Caco-2 (cell line): ENCODE measurements at regions of chr10 and their contacts with region 1.

Region 1: DNA sequence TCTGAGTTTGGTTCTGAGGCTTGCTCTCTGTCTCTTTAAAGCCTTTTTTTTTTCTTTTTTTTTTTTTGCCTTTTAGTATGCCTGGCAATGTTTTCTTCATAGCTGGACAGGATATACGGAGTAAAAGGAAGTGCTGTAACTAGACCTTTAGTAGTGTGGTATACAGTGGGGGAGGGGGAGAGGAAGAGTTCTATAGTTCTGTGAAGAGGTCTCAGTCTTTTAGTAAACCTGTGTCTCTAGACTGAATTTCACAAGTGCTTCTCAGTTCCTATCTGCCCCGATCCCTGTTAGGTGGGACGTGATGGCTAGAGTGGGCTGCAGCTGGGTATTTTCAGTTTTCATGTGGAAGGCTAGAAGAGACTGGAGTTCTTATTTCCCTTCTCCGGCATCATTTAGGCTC is 3.1 kb upstream of the ABCC2 start:
- DNase-seq: peak in 1 of 2 experiments; percentile 42
- H3K4me3 ChIP-seq: peak overlapping the region; percentile 21
- H3K4me3 Mint-ChIP-seq: peak overlapping the region; percentile 77
- H3K27ac Mint-ChIP-seq: peak overlapping the region; percentile 95
- H3K4me1 ChIP-seq: peaks cover 61% of the 10 kb centered on the region
- H3K4me1 Mint-ChIP-seq: peaks cover 74% of the 10 kb centered on the region
- H3K27me3 ChIP-seq: no peaks in the 10 kb centered on the region
- H3K27me3 Mint-ChIP-seq: no peaks in the 10 kb centered on the region
- CTCF ChIP-seq: no peak

Region 2: GRCh38 chr10:99732033-99732912 is 47.1 kb before region 1 on chr10 and contains the starts of genes COX15 and CUTC:
- CTCF ChIA-PET with region 1: interaction called, 9 read pairs
- POLR2A ChIA-PET with region 1: interaction called, 27 read pairs
- intact Hi-C with region 1: loop called (anchors 1 kb)
- DNase-seq: peak; percentile 97 to 98
- H3K4me3 ChIP-seq: peak within 1 kb of the TSS; percentile 98
- H3K4me3 Mint-ChIP-seq: peak within 1 kb of the TSS; percentile 96
- H3K27ac Mint-ChIP-seq: peak within 1 kb of the TSS; percentile 97
- H3K4me1 ChIP-seq: no peaks in the 10 kb centered on the region; the same call in 1 of the 2 replicates
- H3K4me1 Mint-ChIP-seq: peaks cover 13% of the 10 kb centered on the region
- H3K27me3 ChIP-seq: no peaks in the 10 kb centered on the region
- H3K27me3 Mint-ChIP-seq: no peaks in the 10 kb centered on the region
- CTCF ChIP-seq: peak; percentile 61 to 69
- total RNA-seq, gene COX15: 47.6 and 50.2 TPM in 2 replicates
- total RNA-seq, gene CUTC: 27.6 and 30.1 TPM in 2 replicates

Region 3: GRCh38 chr10:99930731-99931550 is 151.6 kb after region 1 on chr10:
- CTCF ChIA-PET with region 1: no interaction called
- POLR2A ChIA-PET with region 1: no interaction called
- intact Hi-C with region 1: loop called (anchors 2 kb)
- DNase-seq: peak; percentile 94 to 95
- H3K4me3 ChIP-seq: peak overlapping the region; percentile 56
- H3K4me3 Mint-ChIP-seq: peak overlapping the region; percentile 89
- H3K27ac Mint-ChIP-seq: peak overlapping the region; percentile 89
- H3K4me1 ChIP-seq: peaks cover 32% of the 10 kb centered on the region
- H3K4me1 Mint-ChIP-seq: peaks cover 27% of the 10 kb centered on the region
- H3K27me3 ChIP-seq: no peaks in the 10 kb centered on the region
- H3K27me3 Mint-ChIP-seq: no peaks in the 10 kb centered on the region
- CTCF ChIP-seq: peak in 1 of 2 experiments; percentile 9